ENCODE measurements at regions of chr9 and their contacts with region 1.

Region 1: DNA sequence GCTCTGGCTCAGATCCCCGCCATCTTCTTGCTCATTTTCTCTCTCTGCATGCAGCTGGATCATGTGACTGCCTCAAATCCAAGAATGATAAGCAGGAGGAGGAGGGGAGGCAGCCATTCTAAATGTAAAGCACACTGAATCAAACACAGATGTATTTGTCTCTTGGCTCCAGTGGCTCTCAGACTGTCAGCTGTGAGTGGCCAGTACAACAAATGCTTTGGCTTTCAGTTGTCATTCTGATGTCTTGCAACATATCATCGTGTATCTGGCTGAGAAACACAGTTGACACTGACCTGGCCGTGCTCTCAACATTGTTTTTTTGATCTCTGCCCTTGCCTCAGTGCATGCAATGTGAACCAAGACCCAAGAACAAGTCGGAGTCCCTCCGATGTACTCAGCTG is 233.1 kb downstream of the ADAMTSL1 start:
- DNase-seq: no peak
- H3K4me3 ChIP-seq: no peak overlapping the region
- H3K27ac ChIP-seq: no peak overlapping the region
- H3K4me1 ChIP-seq: peaks cover 22% of the 10 kb centered on the region
- H3K27me3 ChIP-seq: no peaks in the 10 kb centered on the region
- CTCF ChIP-seq: no peak
- POLR2A ChIP-seq: no peak

Region 2: DNA sequence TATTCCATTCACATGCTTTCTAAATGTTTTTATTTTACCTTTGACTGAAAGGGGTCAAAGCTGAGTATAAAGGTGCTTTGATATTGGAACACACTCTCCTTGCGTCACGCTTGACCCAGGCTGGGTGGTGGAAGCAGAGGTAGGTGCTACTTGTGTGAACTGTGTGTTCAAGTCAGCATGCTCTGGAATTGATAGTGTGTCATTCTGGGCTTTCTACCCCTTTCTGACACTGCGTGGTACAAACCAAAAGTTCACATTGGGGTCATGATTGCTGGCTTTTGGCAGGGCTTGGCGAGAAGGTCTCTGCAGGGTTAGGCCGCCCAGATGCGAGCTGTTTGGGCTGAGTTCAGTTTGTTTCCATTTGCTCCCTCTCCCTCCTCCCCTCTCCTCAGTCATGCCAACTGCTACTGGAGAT is 101.3 kb before region 1 on chr9:
- intact Hi-C with region 1: no loop called
- DNase-seq: no peak
- H3K4me3 ChIP-seq: no peak overlapping the region
- H3K27ac ChIP-seq: peak overlapping the region; percentile 50
- H3K4me1 ChIP-seq: peaks cover 25% of the 10 kb centered on the region
- H3K27me3 ChIP-seq: no peaks in the 10 kb centered on the region
- CTCF ChIP-seq: no peak
- POLR2A ChIP-seq: no peak

Region 3: DNA sequence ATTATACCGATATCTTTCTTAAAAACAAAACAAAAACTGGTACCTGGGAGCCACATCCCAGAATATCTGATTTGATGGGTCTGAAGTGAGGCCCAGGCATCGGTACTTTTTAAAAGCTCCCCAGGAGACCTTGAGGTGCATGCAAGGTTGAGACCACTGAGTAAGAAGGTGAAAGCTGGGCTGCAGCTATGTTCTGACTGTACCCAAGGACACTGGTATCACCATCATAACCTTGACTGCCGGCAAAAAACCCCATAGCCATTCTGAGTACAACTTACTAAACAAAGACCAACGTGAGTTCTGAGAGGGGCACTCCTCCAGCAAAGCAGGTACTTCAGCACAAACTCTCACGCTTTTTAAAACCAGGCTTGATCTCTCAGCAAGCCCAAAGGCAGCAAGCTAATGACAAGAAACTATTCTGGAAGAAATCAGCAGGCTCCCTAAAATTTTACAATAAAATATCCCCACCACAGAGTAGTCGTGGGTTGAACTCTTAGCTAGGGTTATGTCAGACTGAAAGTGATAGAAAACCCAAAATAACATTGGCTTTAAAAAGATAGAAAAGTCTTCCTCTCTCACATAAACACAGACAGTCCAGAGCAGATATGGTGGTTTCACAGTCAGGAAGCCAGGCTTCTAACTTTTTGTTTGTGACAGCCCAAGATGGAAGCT is 62.0 kb after region 1 on chr9:
- intact Hi-C with region 1: loop called (anchors 10 kb)
- DNase-seq: no peak
- H3K4me3 ChIP-seq: no peak overlapping the region
- H3K27ac ChIP-seq: no peak overlapping the region
- H3K4me1 ChIP-seq: no peaks in the 10 kb centered on the region
- H3K27me3 ChIP-seq: no peaks in the 10 kb centered on the region
- CTCF ChIP-seq: no peak
- POLR2A ChIP-seq: no peak

Region 4: DNA sequence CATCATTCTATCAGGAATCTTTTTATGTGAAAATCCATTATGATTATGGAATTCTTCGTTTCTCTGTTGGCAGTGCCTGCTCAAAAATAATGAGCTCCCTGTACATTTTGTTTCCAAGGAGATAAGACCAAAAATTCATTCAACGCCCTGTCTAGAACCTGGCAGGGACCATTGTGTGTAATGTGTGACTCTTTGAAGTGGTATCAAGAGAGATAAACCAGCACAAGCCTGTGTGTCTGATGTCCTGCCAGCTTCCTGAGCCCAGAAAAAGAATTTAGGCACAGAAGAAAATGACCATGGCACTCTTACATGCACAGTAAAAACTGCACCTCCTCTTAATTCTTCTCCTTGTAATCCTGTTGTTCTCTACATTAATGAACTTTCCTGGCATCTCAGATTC is 148.6 kb after region 1 on chr9:
- intact Hi-C with region 1: no loop called
- DNase-seq: no peak
- H3K4me3 ChIP-seq: no peak overlapping the region
- H3K27ac ChIP-seq: no peak overlapping the region
- H3K4me1 ChIP-seq: no peaks in the 10 kb centered on the region
- H3K27me3 ChIP-seq: no peaks in the 10 kb centered on the region
- CTCF ChIP-seq: no peak
- POLR2A ChIP-seq: no peak

Measured in vagina (tissue), 2 donors.